ENCODE measurements at regions of chr14 and their contacts with region 1.

Region 1: DNA sequence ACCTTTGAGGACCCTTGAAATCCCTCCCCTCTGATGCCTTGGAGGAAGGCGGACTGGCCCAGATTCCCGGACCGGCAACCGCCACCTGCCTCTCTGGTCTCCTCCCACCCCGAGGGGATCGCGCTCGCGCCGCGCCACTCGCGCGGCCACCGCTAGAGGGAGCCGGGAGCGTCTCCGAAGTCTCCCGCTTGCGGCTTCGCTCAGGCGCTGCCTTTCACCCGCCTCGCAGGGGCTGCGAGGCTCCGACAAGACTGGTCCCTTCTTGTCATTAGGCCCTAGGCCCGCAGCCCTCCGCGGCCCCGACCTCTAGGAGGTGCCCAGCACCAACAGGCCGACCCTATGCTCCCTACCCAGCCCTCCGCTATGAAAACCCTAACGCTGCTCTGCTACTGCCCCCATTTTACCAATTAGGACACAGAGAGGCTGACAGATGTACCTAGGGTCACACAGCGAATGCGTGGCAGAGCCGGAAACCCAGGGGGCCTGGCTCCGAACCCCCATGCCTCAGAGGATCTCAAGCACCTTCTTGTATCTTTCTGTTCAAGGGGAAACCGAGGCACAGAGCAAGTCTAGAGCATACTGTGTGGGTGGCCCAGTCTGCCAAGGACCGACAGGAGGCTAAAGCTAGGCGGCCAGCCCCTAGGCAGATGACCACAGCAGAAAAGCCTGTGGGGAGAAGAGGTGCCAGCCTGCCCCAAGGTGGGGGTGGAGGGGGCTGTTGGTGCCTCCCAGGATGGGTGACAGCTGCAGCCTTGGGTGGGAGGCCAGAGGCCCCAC is 21.4 kb upstream of the VSX2 start:
- DNase-seq: no peak
- H3K4me3 ChIP-seq: no peak overlapping the region; the same call in 1 of the 2 replicates
- CTCF ChIP-seq: peak; percentile 97

Region 2: GRCh38 chr14:74231784-74232183 is 13.9 kb after region 1 on chr14:
- CTCF ChIA-PET with region 1: interaction called, 32 read pairs
- POLR2A ChIA-PET with region 1: no interaction called
- DNase-seq: no peak
- H3K4me3 ChIP-seq: no peak overlapping the region
- CTCF ChIP-seq: no peak

Region 3: GRCh38 chr14:74249433-74250375 is 31.8 kb after region 1 on chr14:
- CTCF ChIA-PET with region 1: interaction called, 20 read pairs
- POLR2A ChIA-PET with region 1: no interaction called
- DNase-seq: no peak
- H3K4me3 ChIP-seq: no peak overlapping the region
- CTCF ChIP-seq: no peak